KBM-7 (cell line): ENCODE measurements at regions of chr1 and their contacts with region 1.

Region 1: GRCh38 chr1:180527101-180527669 is 24.8 kb upstream of the ACBD6 start:
- DNase-seq: no peak

Region 2: DNA sequence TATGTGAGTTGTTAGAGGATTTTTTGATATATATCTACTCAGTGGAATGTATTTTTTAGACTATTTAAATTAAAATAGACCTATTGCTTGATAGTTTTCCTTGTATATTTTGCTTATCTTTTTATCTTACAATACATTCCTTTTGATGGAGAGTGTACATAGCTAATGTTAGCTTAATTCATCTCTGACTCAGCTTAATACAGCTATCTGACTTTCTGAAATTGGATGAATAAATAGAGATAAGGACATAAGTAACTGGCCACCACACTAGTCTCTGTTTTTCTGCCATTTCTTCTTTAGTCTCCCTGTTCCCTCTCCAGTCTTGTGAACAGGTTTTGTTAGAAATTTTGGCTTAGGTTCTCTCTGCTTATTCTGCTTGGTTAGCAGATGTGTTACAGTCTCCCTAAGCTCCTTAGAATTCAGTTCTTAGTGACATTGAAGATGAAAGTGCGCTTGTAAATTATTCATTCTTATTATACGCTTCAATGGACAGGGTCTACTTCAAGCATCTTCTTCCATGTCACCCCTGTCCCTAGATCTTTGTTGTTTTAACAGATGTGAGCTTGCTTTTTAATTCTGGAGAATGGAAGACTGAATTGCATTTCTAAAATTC is 164.2 kb after region 1 on chr1:
- in situ Hi-C with region 1: no loop called
- DNase-seq: no peak

Region 3: DNA sequence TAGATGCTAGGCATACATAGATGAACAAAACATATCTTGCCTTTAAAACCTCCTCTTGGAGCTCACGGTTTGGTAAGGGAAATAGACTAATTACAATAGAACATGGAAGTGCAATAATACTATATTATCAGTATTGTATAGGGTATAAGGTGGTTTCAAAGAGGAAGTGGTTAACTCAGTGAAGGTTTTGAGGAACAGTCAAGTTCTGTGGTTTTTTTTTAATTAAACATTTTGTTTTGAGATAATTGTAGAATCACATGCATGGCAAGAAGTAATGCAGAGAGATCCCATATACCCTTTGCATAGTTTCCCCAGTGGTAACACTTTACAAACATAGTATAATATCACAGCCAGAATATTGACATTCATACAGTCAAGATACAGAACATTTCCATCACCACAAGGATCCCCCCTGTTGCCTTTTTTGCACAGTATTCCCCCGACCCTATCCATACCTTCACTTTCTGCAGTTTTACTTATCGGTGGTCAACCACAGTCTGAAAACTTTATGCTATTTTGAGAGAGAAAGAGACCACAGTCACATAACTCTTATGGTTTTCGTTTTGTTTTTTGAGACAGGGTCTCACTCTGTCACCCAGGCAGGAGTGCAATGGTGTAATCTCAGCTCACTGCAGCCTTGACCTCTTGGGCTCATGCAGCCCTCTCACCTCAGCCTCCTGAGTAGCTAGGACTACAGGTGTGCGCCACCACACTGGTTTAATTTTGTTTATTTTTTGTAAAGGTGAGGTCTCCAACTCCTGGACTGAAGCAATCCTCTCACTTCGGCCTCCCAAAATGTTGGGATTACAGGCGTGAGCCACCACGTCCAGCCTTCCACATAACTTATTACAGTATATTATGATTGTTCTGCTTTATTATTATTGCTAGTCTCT is 325.1 kb after region 1 on chr1:
- in situ Hi-C with region 1: loop called (anchors 10 kb)
- DNase-seq: peak; percentile 71